Dendritic cell treated with granulocyte-macrophage colony-stimulating factor and Interleukin-4, amounts not matched to agents 40 ng/mL and 50 ng/mL, for 4 days (primary cell): ENCODE measurements at regions of chr22 and their contacts with region 1.

Region 1: GRCh38 chr22:36803358-36803757 is 13.5 kb downstream of the PVALB start:
- H3K4me3 Mint-ChIP-seq: no peak overlapping the region
- H3K27ac Mint-ChIP-seq: no peak overlapping the region
- H3K4me1 Mint-ChIP-seq: peaks cover 19% of the 10 kb centered on the region
- H3K27me3 Mint-ChIP-seq: peaks cover 75% of the 10 kb centered on the region

Region 2: DNA sequence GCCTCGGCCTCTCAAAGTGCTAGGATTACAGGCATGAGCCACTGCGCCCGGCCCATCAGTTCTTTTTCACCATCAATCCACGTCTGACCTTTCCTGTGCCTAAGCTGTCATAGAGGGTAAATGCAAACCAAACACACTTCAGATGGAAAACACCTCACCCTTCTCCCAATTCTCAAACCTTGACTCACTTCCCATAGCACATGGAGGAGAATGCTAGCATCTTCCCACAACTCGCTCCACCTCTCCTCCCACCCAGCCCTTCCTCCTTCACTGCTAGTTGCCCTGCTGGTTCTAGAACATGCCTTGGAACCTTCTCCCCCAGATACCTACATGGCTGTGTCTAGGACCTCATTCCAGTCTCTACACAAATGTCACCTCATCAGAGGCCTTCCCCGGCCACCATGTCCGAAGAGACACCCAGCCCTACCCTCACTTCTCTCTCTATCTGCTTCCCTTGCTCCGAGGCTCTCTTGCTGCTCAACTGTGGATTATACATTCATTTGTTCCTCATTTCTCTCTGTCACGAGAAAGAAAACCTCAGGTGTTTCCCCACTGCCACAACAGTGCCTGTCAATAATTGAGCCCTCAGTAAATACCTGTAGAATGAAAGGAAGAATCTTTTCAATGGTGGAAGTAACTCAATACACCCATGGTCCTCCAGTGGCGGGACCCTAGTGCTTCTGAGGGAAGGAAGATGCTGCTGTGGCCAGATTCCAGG is 36.2 kb after region 1 on chr22:
- intact Hi-C with region 1: loop called (anchors 5 kb)
- H3K4me3 Mint-ChIP-seq: no peak overlapping the region
- H3K27ac Mint-ChIP-seq: no peak overlapping the region
- H3K4me1 Mint-ChIP-seq: peaks cover 10% of the 10 kb centered on the region
- H3K27me3 Mint-ChIP-seq: peaks cover 83% of the 10 kb centered on the region